Cardiac septum (tissue), 1 donor: ENCODE measurements at regions of chr16 and their contacts with region 1.

Region 1: GRCh38 chr16:88662843-88663606 is at the start of gene MVD:
- DNase-seq: peak; percentile 99
- total RNA-seq, gene MVD: 27.1 TPM

Region 2: DNA sequence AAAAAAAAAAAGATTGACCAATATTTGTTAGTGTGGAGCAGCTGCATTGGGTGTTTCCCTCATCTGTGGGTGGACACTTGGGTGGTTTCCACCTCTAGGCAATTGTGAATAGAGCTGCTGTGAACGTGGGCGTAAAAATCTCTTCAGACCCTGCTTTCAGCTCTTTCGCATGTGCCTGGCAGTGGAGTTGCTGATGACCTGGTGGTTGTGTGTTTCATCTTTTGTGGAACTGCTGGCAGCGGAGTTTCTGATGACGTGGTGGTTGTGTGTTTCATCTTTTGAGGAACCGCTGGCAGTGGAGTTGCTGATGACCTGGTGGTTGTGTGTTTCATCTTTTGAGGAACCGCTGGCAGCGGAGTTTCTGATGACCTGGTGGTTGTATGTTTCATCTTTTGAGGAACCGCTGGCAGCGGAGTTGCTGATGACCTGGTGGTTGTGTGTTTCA is 71.4 kb before region 1 on chr16:
- intact Hi-C with region 1: loop called (anchors 5 kb)
- DNase-seq: peak; percentile 79